WTC11 (cell line): ENCODE measurements at regions of chr2 and their contacts with region 1.

Region 1: DNA sequence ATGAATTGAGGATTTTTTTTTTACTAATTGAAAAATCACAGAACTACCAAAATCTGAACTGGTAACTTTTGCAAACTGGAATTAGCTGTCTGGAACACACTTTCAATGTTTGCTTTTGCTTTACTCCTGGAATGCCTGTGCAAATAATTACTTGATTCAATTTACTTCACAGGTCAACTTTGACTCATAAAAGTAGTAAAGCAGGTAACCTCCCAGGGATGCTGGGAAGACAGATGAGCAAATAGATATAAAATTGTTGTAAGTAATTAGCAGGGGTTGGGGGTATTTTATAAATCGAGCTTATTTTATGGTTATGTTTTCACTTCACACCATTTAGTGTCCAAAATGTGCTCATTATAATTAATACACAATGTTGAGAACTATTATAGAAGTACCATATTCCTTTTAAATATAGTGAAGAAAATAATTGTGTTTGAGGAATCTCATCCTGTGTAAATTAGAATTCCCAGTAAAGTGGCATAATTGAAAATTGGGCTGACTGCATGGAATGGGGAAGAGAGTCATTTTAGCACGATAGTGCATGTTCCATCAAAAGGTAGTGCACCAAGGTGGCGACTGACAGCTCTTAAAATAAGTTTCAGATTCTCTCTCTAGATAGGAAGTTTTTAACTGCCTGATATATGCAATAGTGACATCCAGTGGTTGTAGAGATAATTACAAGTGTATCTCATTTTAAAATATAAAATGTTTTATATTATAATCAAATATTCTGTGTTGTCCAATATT is 398.1 kb upstream of the HNRNPA3 start:
- DNase-seq: no peak
- ATAC-seq: no peak
- H3K4me3 Mint-ChIP-seq: no peak overlapping the region
- H3K27ac Mint-ChIP-seq: no peak overlapping the region
- H3K4me1 Mint-ChIP-seq: peaks cover 57% of the 10 kb centered on the region
- H3K27me3 Mint-ChIP-seq: no peaks in the 10 kb centered on the region; the same call in 1 of the 2 replicates
- CTCF ChIP-seq: peak; percentile 44; the same call in 1 of the 2 replicates

Region 2: DNA sequence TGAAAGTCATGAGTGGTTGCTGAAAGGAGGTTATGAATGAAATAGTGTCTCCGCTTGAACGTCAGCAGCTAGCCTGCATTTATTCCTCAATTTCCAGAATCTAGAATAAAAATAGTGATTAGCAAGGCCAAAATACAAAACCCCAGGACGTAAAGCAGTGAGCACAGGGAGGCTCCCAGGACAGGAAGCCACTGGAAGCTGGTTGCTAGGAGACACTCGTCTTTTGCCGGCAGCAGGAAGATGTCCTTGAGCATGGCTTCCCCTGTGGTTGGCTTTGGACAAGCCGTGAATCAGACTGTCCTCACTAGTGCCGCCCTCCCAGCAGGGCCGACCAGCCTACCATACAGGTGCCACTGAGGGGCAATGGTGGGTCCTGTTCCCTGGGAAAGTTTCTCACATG is 170.8 kb before region 1 on chr2:
- CTCF ChIA-PET with region 1: interaction called, 12 read pairs
- POLR2A ChIA-PET with region 1: no interaction called
- DNase-seq: peak; percentile 22
- ATAC-seq: peak; percentile 68
- H3K4me3 Mint-ChIP-seq: no peak overlapping the region
- H3K27ac Mint-ChIP-seq: no peak overlapping the region
- H3K4me1 Mint-ChIP-seq: peaks cover 44% of the 10 kb centered on the region
- H3K27me3 Mint-ChIP-seq: peaks cover 95% of the 10 kb centered on the region
- CTCF ChIP-seq: no peak

Region 3: DNA sequence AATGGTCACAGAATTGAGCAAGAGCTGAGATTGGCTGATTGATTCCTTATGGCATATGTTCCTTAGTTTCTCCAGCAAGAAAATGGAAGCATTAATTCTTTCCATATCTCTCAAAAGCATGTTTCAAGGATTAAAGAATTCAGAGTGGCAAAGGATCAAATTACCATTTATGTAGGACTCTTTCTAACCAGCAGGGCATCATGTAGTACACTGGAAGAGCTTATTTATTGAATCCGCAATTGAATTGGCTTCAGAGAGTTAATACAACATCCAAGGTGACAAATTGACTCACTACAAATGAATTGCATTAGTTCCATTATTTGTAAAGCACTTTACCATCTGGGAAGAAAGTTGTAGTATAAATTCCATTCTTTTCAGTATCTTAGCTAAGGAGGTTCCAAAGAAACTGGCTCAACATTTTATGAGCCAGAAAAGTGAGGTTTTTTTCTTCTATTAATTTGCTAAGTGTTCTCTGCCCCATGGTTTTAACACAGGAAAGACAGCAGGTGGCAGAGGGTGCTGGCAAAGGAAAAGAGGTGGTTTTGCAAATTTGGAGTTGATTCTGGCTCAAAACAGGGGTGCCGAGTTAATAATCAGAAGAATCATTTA is 135.3 kb before region 1 on chr2:
- CTCF ChIA-PET with region 1: interaction called, 15 read pairs
- POLR2A ChIA-PET with region 1: no interaction called
- DNase-seq: no peak
- ATAC-seq: no peak
- H3K4me3 Mint-ChIP-seq: no peak overlapping the region
- H3K27ac Mint-ChIP-seq: no peak overlapping the region
- H3K4me1 Mint-ChIP-seq: peaks cover 38% of the 10 kb centered on the region
- H3K27me3 Mint-ChIP-seq: peaks cover 15% of the 10 kb centered on the region
- CTCF ChIP-seq: no peak

Region 4: GRCh38 chr2:176702169-176702568 is 112.3 kb before region 1 on chr2:
- CTCF ChIA-PET with region 1: interaction called, 12 read pairs
- POLR2A ChIA-PET with region 1: no interaction called
- DNase-seq: no peak
- ATAC-seq: no peak
- H3K4me3 Mint-ChIP-seq: no peak overlapping the region
- H3K27ac Mint-ChIP-seq: no peak overlapping the region
- H3K4me1 Mint-ChIP-seq: peaks cover 4% of the 10 kb centered on the region; the same call in 1 of the 2 replicates
- H3K27me3 Mint-ChIP-seq: no peaks in the 10 kb centered on the region
- CTCF ChIP-seq: no peak

Region 5: GRCh38 chr2:176745543-176746200 is 68.8 kb before region 1 on chr2:
- CTCF ChIA-PET with region 1: interaction called, 18 read pairs
- POLR2A ChIA-PET with region 1: no interaction called
- DNase-seq: no peak
- ATAC-seq: peak; percentile 68
- H3K4me3 Mint-ChIP-seq: peak overlapping the region; percentile 49
- H3K27ac Mint-ChIP-seq: peak overlapping the region; percentile 95
- H3K4me1 Mint-ChIP-seq: peaks cover 58% of the 10 kb centered on the region
- H3K27me3 Mint-ChIP-seq: no peaks in the 10 kb centered on the region
- CTCF ChIP-seq: no peak

Region 6: DNA sequence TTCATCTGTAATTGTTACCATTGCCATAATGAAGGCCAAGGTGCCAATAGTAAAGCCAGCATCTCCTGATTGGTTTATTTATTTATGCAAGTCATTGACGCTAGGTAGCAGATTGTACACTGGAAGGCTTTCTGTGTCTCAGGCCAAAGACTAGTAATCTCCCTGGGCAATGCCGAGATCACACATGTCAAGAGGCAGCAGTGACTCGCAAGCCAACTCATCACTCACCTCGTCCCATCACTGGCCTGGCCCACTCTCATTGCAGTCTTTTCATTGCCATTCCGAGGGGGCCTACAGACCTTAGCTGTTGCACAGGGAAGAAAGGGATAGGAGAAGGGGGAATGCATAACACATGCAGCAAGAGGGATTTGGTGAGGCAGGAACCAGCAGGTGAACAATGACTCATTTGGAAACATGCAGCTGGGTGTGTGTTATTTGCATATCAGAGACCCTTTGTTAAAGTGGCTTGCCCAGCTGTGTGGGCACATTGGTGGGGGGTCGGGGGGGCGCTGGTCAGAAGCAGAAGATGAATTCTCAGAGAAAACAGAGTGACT is 50.6 kb before region 1 on chr2:
- CTCF ChIA-PET with region 1: interaction called, 11 read pairs
- POLR2A ChIA-PET with region 1: no interaction called
- DNase-seq: peak; percentile 53
- ATAC-seq: peak; percentile 94
- H3K4me3 Mint-ChIP-seq: peak overlapping the region; percentile 49
- H3K27ac Mint-ChIP-seq: peak overlapping the region; percentile 95
- H3K4me1 Mint-ChIP-seq: peaks cover 58% of the 10 kb centered on the region
- H3K27me3 Mint-ChIP-seq: no peaks in the 10 kb centered on the region; the same call in 1 of the 2 replicates
- CTCF ChIP-seq: no peak

Region 7: DNA sequence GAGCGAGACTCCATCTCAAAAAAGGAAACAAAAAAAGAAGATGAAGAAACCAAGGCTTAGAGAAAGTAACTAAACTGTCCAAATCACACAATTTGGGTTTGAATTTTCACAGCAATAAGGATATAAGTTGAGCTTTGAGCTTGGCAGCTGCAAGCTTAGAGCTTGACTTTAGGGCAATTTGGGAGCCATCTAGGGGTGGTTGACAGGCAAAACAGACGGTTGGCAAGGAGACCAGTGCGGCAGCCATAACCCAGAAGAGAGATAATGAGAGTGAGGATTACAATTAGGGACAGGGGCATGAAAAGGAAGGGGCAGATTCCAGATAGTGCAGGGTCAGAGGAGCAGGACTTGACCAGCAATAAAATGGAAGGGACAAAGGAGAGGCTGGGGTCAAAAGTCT is 15.9 kb after region 1 on chr2:
- CTCF ChIA-PET with region 1: interaction called, 10 read pairs
- POLR2A ChIA-PET with region 1: no interaction called
- DNase-seq: no peak
- ATAC-seq: peak; percentile 90
- H3K4me3 Mint-ChIP-seq: no peak overlapping the region
- H3K27ac Mint-ChIP-seq: no peak overlapping the region
- H3K4me1 Mint-ChIP-seq: peaks cover 6% of the 10 kb centered on the region
- H3K27me3 Mint-ChIP-seq: no peaks in the 10 kb centered on the region; the same call in none of the 2 replicates
- CTCF ChIP-seq: no peak